ENCODE measurements at regions of chr10 and their contacts with region 1.

Region 1: GRCh38 chr10:119368991-119369869 is 161.9 kb downstream of the GRK5 start:
- DNase-seq: peak; percentile 46
- ATAC-seq: peak; percentile 72
- H3K4me3 Mint-ChIP-seq: peak overlapping the region; percentile 87
- H3K27ac Mint-ChIP-seq: peak overlapping the region; percentile 98
- H3K4me1 Mint-ChIP-seq: peaks cover 66% of the 10 kb centered on the region
- H3K27me3 Mint-ChIP-seq: no peaks in the 10 kb centered on the region
- CTCF ChIP-seq: no peak

Region 2: GRCh38 chr10:118605694-118606093 is 763.5 kb before region 1 on chr10:
- CTCF ChIA-PET with region 1: no interaction called
- POLR2A ChIA-PET with region 1: no interaction called
- intact Hi-C with region 1: no loop called
- DNase-seq: no peak
- ATAC-seq: no peak
- H3K4me3 Mint-ChIP-seq: no peak overlapping the region
- H3K27ac Mint-ChIP-seq: no peak overlapping the region
- H3K4me1 Mint-ChIP-seq: no peaks in the 10 kb centered on the region
- H3K27me3 Mint-ChIP-seq: peaks cover 5% of the 10 kb centered on the region
- CTCF ChIP-seq: no peak

Region 3: DNA sequence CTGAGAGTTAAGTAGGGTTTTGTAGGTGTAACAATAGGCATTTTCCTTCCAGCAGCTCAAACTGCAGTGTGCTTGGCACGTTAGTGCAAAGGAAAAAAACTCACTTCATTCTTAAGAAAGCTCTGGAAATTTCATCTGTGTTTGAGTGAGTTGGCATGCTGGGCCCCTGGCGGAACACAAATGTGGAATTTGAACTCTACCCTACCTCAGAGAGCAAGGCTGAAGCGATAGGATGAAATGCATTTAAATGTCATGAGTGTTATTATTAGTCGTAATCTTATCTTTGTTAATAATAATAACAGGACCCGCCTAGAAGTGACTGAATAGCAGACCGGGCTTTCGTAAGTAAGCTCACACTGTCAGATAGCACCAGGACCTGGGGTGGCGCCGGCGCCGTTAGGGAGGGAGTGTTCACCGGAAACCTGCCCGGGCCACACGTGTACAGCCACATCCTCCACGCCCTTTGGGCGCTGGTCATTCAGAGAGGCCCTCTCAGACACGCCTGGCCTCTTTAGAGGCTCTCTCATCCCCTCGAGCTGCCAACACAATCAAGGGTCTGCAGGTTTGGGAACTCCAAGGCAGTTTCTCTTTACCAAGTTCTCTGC is 98.4 kb before region 1 on chr10:
- CTCF ChIA-PET with region 1: no interaction called
- POLR2A ChIA-PET with region 1: interaction called, 3 read pairs
- intact Hi-C with region 1: loop called (anchors 5 kb)
- DNase-seq: peak; percentile 45
- ATAC-seq: peak; percentile 49
- H3K4me3 Mint-ChIP-seq: peak overlapping the region; percentile 69
- H3K27ac Mint-ChIP-seq: peak overlapping the region; percentile 96
- H3K4me1 Mint-ChIP-seq: peaks cover 87% of the 10 kb centered on the region
- H3K27me3 Mint-ChIP-seq: no peaks in the 10 kb centered on the region
- CTCF ChIP-seq: no peak

Region 4: DNA sequence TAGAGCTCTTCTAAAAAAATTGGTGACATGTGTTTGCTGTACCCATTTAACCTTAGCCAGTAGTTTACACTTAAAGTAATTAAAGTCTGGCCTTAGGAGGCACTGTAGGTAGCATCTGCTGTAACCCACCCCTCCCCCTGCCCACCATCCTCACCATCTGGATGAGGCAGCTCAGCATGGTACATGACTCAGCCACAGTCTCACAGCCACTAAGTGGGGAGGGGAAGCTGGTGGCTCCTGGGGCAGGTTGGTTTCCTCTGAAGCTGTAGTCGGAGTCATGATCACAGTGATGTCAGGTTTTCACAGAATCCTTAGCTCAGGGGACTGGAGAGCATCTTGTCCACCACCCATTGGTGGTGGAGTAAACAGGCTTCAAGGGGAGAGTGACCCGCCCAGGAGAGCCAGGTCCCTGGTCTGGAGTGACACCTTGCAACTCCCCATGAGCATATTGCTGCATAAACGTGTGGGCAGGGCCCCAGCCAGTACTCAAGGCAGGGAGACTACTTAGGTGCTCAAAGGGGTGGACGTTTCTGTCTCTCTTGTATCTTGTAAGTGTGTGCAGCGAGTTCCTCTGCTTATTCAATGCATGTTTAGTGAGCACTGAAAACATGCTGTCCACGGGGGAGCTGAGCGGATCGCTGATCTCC is 36.0 kb before region 1 on chr10:
- CTCF ChIA-PET with region 1: no interaction called
- POLR2A ChIA-PET with region 1: interaction called, 3 read pairs
- intact Hi-C with region 1: loop called (anchors 5 kb)
- DNase-seq: no peak
- ATAC-seq: peak; percentile 75
- H3K4me3 Mint-ChIP-seq: no peak overlapping the region
- H3K27ac Mint-ChIP-seq: no peak overlapping the region
- H3K4me1 Mint-ChIP-seq: peaks cover 10% of the 10 kb centered on the region
- H3K27me3 Mint-ChIP-seq: no peaks in the 10 kb centered on the region
- CTCF ChIP-seq: no peak

Region 5: DNA sequence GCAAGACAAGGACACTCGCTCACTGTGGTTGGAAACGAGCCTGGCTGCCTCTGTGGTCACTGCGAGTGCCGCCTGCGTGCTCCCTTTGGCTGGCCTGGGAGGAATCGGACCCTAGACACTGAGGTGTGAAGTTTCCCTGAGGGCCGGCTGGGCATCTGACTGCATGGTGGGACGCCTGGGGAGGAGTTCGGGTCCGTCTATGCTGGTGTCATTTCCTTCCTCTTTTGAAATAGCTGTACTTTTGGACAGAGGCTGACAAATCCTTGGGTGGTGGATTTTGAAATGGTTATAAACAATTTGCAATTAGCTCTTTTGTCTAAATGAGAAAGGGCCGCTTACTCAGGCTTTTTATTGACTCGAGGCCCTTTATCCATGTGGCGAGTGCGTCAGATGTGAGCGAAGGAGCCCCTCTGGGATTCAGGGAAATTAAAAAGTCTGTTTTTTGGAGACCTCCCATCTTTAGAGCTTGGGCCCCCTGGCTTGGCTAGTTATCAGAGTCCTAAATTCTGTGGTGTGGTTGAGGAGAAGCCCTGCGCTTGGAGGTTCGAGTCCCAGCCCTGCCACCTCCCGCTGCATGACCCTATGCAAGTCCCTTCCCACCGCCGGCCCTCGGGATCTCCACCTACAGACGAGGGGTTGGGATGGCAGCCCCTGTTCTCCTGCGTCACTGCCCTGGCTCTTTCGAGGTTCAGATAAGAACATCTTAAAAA is 26.2 kb after region 1 on chr10:
- CTCF ChIA-PET with region 1: no interaction called
- POLR2A ChIA-PET with region 1: interaction called, 9 read pairs
- intact Hi-C with region 1: loop called (anchors 2 kb)
- DNase-seq: peak; percentile 32
- ATAC-seq: peak; percentile 77
- H3K4me3 Mint-ChIP-seq: peak overlapping the region; percentile 60
- H3K27ac Mint-ChIP-seq: peak overlapping the region; percentile 91
- H3K4me1 Mint-ChIP-seq: peaks cover 44% of the 10 kb centered on the region
- H3K27me3 Mint-ChIP-seq: no peaks in the 10 kb centered on the region
- CTCF ChIP-seq: no peak

Region 6: DNA sequence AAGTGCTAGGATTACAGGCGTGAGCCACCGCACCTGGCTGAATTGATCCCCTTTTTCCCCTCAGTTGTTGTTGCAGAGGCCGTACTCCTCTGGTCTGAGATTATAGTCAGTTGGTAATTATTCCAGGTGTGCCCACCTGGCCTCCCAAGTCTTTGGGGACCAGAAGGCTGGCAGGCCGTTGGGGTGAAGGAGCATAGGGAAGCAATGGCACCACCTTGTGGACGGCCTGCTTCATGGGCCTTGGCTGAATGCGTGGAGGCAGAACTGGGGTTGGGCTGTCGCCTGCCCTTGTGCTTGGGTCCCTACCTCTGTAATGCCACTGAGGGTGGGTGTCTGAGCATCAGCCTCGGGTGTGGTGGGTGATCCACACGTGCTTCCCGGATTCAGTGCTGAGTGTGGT is 47.6 kb after region 1 on chr10:
- CTCF ChIA-PET with region 1: no interaction called
- POLR2A ChIA-PET with region 1: no interaction called
- intact Hi-C with region 1: loop called (anchors 2 kb)
- DNase-seq: peak; percentile 57
- ATAC-seq: peak; percentile 92
- H3K4me3 Mint-ChIP-seq: no peak overlapping the region
- H3K27ac Mint-ChIP-seq: no peak overlapping the region
- H3K4me1 Mint-ChIP-seq: peaks cover 2% of the 10 kb centered on the region
- H3K27me3 Mint-ChIP-seq: no peaks in the 10 kb centered on the region
- CTCF ChIP-seq: peak; percentile 22

Region 7: GRCh38 chr10:120017733-120018417 is 648.6 kb after region 1 on chr10:
- CTCF ChIA-PET with region 1: no interaction called
- POLR2A ChIA-PET with region 1: no interaction called
- intact Hi-C with region 1: no loop called
- DNase-seq: no peak
- ATAC-seq: no peak
- H3K4me3 Mint-ChIP-seq: no peak overlapping the region
- H3K27ac Mint-ChIP-seq: no peak overlapping the region
- H3K4me1 Mint-ChIP-seq: no peaks in the 10 kb centered on the region
- H3K27me3 Mint-ChIP-seq: peaks cover 16% of the 10 kb centered on the region
- CTCF ChIP-seq: no peak

Measured in activated B cell treated with CpG ODN at 0.5 μM for 24 hours (primary cell).